Activated CD4-positive, alpha-beta memory T cell treated with anti-CD3 and anti-CD28 coated beads for 36 hours (primary cell): ENCODE measurements at regions of chr2 and their contacts with region 1.

Region 1: DNA sequence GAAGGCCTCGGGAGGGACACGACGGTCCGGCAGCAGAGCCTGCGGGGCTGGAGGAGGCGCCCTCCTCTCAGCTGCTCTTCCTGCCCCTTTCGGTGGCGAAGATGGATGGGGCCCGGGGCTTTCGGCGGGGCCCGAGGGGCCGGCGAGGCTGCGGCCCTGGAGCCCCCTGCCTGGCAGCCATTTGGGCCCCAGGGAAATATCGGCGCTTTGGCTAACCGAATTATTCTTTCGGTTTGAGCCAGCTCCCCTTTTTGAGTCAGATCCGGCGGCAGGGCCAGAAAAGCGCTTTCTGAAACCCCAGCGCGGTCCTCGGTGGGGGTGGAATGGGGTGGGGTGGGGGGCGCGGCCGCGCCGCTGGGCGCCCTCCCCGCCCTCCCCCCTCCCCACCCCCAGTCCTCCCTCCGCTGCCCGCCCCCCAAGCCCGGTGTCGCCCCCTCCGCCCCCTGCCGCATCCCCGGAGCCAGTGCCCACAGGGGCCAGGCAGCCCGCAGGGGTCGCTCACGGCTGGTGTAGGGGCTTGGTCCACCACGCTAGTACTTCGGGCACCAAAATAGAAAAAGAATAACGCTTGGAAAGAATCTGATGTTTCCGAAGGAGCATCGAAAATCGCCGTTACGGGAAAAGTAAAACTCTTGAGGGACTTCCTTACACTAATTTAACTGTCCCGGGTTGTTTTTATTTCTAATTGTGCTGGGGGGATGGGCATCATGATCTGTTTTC is 9.1 kb upstream of the ARID5A start:
- DNase-seq: peak; percentile 89
- H3K4me3 Mint-ChIP-seq: peak overlapping the region; percentile 73
- H3K27ac Mint-ChIP-seq: peak overlapping the region; percentile 98
- H3K4me1 Mint-ChIP-seq: peaks cover 96% of the 10 kb centered on the region
- H3K27me3 Mint-ChIP-seq: no peaks in the 10 kb centered on the region

Region 2: GRCh38 chr2:96157651-96158553 is 369.5 kb before region 1 on chr2:
- CTCF ChIA-PET with region 1: no interaction called
- POLR2A ChIA-PET with region 1: no interaction called
- intact Hi-C with region 1: loop called (anchors 2 kb)
- DNase-seq: peak; percentile 99
- H3K4me3 Mint-ChIP-seq: peak overlapping the region; percentile 62
- H3K27ac Mint-ChIP-seq: peak overlapping the region; percentile 96
- H3K4me1 Mint-ChIP-seq: peaks cover 82% of the 10 kb centered on the region
- H3K27me3 Mint-ChIP-seq: no peaks in the 10 kb centered on the region

Region 3: GRCh38 chr2:96485751-96486651 is 41.4 kb before region 1 on chr2:
- CTCF ChIA-PET with region 1: no interaction called
- POLR2A ChIA-PET with region 1: interaction called, 5 read pairs
- intact Hi-C with region 1: loop called (anchors 1 kb)
- DNase-seq: peak; percentile 93
- H3K4me3 Mint-ChIP-seq: peak overlapping the region; percentile 95
- H3K27ac Mint-ChIP-seq: peak overlapping the region; percentile 99
- H3K4me1 Mint-ChIP-seq: peaks cover 47% of the 10 kb centered on the region
- H3K27me3 Mint-ChIP-seq: no peaks in the 10 kb centered on the region

Region 4: DNA sequence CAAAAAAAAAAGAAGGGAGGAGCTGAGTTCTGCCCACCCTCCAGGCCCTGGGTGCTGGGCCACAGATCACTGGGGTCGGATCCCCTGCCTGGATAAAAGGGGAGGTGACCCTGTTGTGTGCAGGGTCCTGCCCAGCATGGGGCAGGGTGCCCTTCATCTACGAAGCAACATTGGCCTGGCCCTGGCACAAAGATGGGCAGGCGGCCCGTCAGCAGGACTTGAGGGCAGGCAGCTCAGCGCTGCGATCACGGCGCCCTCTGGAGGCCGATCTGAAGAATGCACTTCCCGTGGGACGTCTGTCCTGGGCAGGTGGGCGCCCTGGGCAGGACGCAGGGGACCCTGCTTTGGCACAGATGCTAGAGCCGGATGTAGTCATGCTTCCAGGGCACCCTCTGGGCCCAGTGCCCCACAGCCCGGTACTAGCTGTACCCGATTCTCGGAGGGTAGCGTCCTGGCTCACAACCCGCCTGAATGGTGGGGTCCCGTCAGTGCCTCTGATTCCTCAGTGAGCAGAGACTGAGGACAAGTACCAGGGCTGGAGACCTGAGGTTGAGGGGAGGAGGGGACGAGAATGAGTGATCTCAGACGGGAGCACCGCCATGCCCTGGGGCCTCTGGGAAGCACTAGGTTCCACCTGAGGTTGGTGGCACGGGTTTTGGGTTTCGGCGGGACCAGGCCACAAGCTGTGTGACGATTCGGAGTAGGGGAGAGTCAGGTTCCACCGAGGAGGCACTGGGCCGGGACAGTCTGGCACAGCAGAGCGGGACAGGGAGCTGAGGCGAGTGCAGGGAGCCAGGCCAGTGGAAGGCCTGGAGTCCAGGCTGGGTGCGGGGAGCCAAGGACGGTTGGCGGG is 27.1 kb after region 1 on chr2:
- CTCF ChIA-PET with region 1: interaction called, 16 read pairs
- POLR2A ChIA-PET with region 1: interaction called, 7 read pairs
- intact Hi-C with region 1: no loop called
- DNase-seq: peak; percentile 78
- H3K4me3 Mint-ChIP-seq: peak overlapping the region; percentile 43
- H3K27ac Mint-ChIP-seq: peak overlapping the region; percentile 77
- H3K4me1 Mint-ChIP-seq: peaks cover 41% of the 10 kb centered on the region
- H3K27me3 Mint-ChIP-seq: peaks cover 1% of the 10 kb centered on the region